ENCODE measurements at regions of chr2 and their contacts with region 1.

Region 1: GRCh38 chr2:121810959-121811853 is 55.8 kb downstream of the TSN start:
- DNase-seq: peak; percentile 58
- H3K4me3 Mint-ChIP-seq: no peak overlapping the region
- H3K27ac Mint-ChIP-seq: no peak overlapping the region
- H3K4me1 Mint-ChIP-seq: peaks cover 12% of the 10 kb centered on the region
- H3K27me3 Mint-ChIP-seq: peaks cover 15% of the 10 kb centered on the region
- CTCF ChIP-seq: peak; percentile 34

Region 2: GRCh38 chr2:120396013-120396885 is 1415.0 kb before region 1 on chr2:
- CTCF ChIA-PET with region 1: no interaction called
- intact Hi-C with region 1: no loop called
- DNase-seq: no peak
- H3K4me3 Mint-ChIP-seq: no peak overlapping the region
- H3K27ac Mint-ChIP-seq: no peak overlapping the region
- H3K4me1 Mint-ChIP-seq: peaks cover 33% of the 10 kb centered on the region
- H3K27me3 Mint-ChIP-seq: no peaks in the 10 kb centered on the region
- CTCF ChIP-seq: no peak

Region 3: DNA sequence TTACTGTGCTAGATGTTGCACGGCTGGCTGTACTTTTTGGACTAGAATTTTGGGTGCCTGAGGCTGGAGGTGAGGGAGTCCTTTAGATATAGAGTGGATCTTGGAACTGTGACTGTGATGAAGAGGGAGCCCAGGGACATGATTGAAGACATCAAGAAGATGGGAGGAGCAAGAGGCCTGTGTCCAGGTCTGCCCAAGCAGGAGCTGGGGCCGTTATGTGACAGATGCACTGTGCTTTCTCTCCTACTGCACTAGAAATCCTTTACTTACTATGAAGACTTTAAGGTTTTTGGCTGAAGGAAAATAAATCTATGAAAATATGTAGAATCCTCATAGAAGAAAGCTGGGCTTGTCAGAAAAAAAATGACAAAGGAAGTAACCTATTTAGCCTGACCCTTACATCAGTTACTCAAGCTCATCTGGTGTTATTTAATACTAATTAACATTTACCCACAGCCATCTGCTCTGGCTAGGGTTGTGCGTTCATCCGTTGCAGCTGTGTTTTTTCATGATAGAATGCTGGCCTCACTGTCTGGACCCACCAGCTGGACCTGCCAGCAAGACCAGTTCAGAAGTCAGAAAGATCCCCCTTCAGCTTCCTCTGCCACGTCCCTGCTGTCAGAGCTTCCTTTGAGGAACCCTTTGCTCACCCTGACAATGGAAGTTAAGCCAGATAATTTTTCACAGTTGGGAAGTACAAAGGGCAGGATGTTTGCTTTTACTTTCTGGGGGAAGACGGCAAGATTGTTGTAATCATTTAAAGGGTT is 39.0 kb before region 1 on chr2:
- CTCF ChIA-PET with region 1: no interaction called
- intact Hi-C with region 1: no loop called
- DNase-seq: no peak
- H3K4me3 Mint-ChIP-seq: no peak overlapping the region
- H3K27ac Mint-ChIP-seq: no peak overlapping the region
- H3K4me1 Mint-ChIP-seq: peaks cover 13% of the 10 kb centered on the region
- H3K27me3 Mint-ChIP-seq: no peaks in the 10 kb centered on the region
- CTCF ChIP-seq: no peak

Region 4: GRCh38 chr2:121969166-121969565 is 158.0 kb after region 1 on chr2:
- CTCF ChIA-PET with region 1: no interaction called
- intact Hi-C with region 1: loop called (anchors 5 kb)
- DNase-seq: no peak
- H3K4me3 Mint-ChIP-seq: no peak overlapping the region
- H3K27ac Mint-ChIP-seq: no peak overlapping the region
- H3K4me1 Mint-ChIP-seq: peaks cover 9% of the 10 kb centered on the region
- H3K27me3 Mint-ChIP-seq: peaks cover 65% of the 10 kb centered on the region
- CTCF ChIP-seq: no peak

Measured in Calu3 (cell line).